Panc1 (cell line): ENCODE measurements at regions of chr7 and their contacts with region 1.

Region 1: DNA sequence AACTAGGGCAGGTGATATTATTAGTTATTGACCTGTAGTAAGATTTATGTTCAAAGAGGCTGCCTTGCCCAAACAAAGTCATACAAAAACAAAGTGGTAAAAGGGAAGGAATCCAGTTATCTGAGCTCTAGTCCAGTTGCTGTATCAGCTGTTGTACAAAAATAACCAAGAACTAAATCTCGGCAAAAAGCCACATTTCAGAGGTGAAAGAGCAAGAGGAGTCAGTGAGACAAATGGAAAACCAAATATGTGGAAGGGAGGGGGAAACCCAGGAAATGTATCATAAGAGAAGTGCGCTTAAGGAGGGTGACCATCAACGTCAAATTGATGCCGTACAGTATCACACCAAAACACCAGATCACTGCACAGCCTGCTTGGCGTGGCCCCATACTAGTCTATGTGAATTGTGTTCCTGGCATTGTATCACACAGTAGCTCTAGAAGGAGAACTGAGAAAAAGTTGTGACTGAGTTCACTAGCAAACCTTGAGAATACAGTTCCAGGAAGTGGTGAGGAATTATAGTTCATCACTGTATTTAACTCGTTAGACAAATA is 6.4 kb downstream of the AGBL3 start:
- DNase-seq: no peak
- ATAC-seq: no peak
- H3K4me3 ChIP-seq: no peak overlapping the region
- H3K27ac ChIP-seq: no peak overlapping the region
- H3K4me1 ChIP-seq: peaks cover 13% of the 10 kb centered on the region
- H3K27me3 ChIP-seq: no peaks in the 10 kb centered on the region
- CTCF ChIP-seq: no peak

Region 2: GRCh38 chr7:135147899-135148721 is 155.4 kb after region 1 on chr7 and contains the start of gene TMEM140:
- CTCF ChIA-PET with region 1: no interaction called
- POLR2A ChIA-PET with region 1: no interaction called
- in situ Hi-C with region 1: no loop called
- intact Hi-C with region 1: loop called (anchors 10 kb)
- DNase-seq: peak; percentile 84
- ATAC-seq: peak; percentile 91
- H3K4me3 ChIP-seq: peak within 1 kb of the TSS; percentile 42 to 74
- H3K27ac ChIP-seq: peak within 1 kb of the TSS; percentile 86
- H3K4me1 ChIP-seq: peaks cover 15% of the 10 kb centered on the region
- H3K27me3 ChIP-seq: no peaks in the 10 kb centered on the region
- CTCF ChIP-seq: no peak
- total RNA-seq, gene TMEM140: 3.2 TPM